ENCODE measurements at regions of chr13 and their contacts with region 1.

Region 1: GRCh38 chr13:27826379-27827353 is 34.4 kb downstream of the GSX1 start:
- DNase-seq: peak; percentile 86

Region 2: DNA sequence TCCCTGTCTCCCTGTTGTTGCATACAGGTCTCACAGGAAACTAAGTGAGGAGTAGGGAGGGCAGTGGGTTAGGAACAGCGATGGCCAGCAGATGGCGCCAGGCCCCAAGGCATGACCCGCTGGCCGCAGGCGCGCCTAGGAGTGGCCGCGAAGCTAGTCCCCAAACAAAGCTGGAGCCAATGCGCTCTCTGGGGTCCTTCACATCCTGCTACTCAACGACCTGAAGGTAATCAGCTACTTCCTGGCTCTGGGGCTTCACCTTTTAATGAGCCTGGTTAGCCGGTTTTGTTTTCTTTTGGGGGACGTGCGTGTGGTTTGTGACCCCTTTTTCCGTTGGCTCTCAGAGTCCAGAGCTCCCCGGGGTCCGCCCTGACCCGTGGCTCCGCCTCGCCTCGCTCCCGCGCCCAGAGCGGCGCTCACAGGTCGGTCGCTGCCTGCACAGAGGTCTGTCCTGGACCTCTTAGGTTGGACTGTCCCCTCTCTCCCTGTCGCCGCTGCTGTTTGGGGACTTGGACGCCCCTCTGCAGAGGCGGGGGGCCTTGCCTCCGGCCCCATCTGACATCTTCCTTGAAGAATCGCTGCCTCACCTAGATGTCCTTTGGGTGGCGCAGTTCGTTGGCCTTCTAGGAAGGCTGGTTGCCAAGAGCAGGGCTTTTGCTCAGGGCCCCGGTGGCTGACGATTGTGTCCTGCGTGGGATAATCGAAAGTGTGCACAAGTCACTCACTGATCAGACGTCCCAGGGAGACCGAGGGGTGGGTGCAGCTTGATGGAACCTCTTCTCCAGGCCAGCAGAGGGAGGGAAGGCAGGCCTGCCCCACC is 464.4 kb before region 1 on chr13:
- CTCF ChIA-PET with region 1: interaction called, 22 read pairs
- POLR2A ChIA-PET with region 1: interaction called, 3 read pairs
- DNase-seq: peak; percentile 86

Region 3: GRCh38 chr13:27374650-27375049 is 452.0 kb before region 1 on chr13:
- CTCF ChIA-PET with region 1: interaction called, 20 read pairs
- POLR2A ChIA-PET with region 1: no interaction called
- DNase-seq: peak; percentile 81

Region 4: DNA sequence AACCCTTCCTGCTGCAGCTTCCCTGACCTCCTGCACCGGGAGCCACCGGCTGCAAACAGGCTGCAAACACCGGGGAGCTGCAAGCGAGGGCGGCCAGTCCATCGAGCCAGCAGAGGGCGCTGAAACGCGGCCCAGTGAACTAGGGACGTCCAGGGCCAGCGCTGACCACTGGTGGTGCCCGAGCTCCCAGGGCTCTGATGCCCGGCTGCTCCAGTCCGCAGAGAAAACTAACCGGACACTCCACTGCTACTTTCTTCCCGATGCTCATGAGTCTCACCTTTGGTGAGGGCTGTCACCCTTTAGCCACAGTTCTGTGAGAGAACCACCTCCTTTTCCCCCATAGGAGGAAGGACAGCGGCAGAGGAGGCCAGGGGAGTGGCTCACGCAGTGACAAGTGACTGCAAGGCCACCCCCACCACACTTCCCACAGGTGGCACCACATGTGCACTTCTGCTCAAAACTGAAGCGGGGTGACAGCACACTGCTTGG is 293.5 kb before region 1 on chr13:
- CTCF ChIA-PET with region 1: interaction called, 21 read pairs
- POLR2A ChIA-PET with region 1: no interaction called
- DNase-seq: peak; percentile 81

Region 5: GRCh38 chr13:27770809-27771208 is 55.9 kb before region 1 on chr13:
- CTCF ChIA-PET with region 1: interaction called, 15 read pairs
- POLR2A ChIA-PET with region 1: interaction called, 4 read pairs
- DNase-seq: peak; percentile 43

Region 6: DNA sequence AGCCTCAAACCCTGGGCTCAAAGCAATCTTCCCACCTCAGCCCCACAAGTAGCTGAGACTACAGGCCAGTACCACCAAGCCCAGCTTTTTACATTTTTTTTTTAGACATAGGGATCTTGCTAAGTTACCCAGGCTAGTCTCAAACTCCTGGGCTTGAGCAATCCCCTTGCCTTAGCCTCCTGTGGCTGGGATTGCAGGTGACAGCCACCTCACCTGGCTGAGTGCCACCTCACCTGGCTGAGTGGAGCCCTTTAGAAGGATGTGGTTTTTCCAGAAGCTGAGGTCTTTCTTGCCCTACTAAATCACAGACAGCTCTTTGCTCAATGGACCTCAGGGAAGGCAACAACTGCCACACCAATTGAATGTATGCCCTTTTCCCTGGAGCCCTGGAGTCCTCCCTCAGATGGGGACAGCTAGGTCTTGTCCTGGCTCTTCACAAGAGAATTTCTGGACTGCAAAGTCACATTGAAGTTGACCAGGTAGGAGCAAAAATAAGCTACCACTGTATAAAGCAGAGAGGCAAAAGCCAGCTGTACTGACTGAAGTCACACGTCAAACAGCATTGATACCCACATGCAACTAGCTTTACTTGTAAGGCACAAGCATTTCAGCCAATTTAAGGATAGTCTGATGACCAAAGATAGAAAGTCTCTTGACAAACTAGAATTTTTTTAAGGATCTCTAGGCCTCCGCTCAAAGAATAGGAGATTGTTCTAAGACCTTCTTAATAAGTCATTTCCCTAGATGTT is 107.1 kb after region 1 on chr13:
- CTCF ChIA-PET with region 1: no interaction called
- POLR2A ChIA-PET with region 1: no interaction called
- DNase-seq: no peak

Region 7: GRCh38 chr13:27953676-27954405 is 127.2 kb after region 1 on chr13:
- CTCF ChIA-PET with region 1: interaction called, 41 read pairs
- POLR2A ChIA-PET with region 1: interaction called, 4 read pairs
- DNase-seq: peak; percentile 87

Measured in HEK293T (cell line).